ENCODE measurements at regions of chr3 and their contacts with region 1.

Region 1: DNA sequence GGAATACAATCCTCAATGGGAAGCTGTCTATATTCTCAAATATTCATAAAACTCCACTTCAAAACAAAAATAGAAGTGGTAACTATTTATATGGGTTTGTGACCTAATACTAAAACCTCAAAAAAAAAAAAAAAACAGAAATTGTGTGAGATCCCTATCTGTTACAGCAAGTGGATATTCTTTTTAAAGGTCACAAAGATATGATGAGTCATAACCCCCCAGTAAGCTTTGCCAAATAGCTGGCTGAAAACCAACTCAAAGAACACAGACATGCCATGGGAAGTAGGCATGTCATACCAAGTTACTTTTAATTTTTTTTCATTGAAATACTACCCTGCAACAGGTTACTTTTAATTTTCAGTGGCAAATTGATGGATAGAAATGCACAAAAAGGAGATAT is 62.5 kb downstream of the CBLB start:
- DNase-seq: no peak
- ATAC-seq: peak; percentile 35 to 83 (median 52)
- H3K4me3 ChIP-seq: no peak overlapping the region
- H3K27ac ChIP-seq: no peak overlapping the region
- H3K4me1 ChIP-seq: peaks cover 56% of the 10 kb centered on the region
- H3K27me3 ChIP-seq: no peaks in the 10 kb centered on the region
- CTCF ChIP-seq: no peak

Region 2: DNA sequence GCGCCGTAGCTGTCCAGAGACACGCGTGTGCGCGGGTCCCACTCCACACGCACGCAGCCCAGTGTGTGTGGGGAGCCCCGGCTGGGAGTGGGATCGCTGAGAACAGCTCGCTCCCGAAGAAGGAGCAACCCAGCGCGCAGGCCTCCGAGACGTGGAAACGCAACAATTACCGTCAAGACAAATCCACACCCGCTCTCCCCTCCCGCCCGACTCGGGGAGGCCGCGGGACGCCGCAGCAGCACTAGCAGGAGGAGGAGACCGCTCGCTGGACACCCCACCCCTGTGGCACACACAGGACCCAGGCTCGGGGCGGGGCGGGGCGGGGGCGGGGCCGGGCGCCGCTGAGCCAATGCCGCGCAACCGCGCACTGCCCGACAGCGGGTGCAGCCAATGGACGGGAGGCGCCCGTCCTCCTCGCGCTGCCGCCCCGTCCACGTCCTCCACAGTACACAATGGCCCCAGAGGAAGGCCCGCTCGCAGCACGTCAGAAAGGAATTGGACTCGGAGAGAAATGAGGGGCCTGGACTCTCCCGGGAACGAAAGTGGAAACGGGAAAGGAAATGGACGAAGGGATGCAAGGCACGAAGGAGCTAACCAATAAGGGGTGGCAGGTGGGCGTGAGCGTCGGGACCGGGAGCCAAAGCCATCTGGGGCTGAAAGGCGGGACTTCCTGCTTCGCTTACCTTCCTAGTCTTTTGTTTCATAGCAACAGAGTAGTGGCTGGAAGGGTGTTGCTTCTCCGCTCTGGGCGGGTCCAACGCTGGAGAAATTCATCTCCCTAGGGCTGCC is 62.6 kb after region 1 on chr3 and contains the start of gene CBLB:
- intact Hi-C with region 1: loop called in 1 of 2 experiments (anchors 2 kb)
- DNase-seq: peak; percentile 90 to 95
- ATAC-seq: peak; percentile 94 to 97 (median 96)
- H3K4me3 ChIP-seq: peak within 1 kb of the TSS; percentile 96
- H3K27ac ChIP-seq: peak within 1 kb of the TSS; percentile 93
- H3K4me1 ChIP-seq: peaks cover 40% of the 10 kb centered on the region
- H3K27me3 ChIP-seq: no peaks in the 10 kb centered on the region
- CTCF ChIP-seq: no peak
- total RNA-seq, gene CBLB: 12.1 to 18.2 (median 14.9) TPM

Region 3: GRCh38 chr3:105938101-105938500 is 131.7 kb after region 1 on chr3:
- intact Hi-C with region 1: no loop called
- DNase-seq: no peak
- ATAC-seq: peak in 1 of 4 donors; percentile 57
- H3K4me3 ChIP-seq: peak overlapping the region; percentile 36
- H3K27ac ChIP-seq: no peak overlapping the region
- H3K4me1 ChIP-seq: no peaks in the 10 kb centered on the region
- H3K27me3 ChIP-seq: no peaks in the 10 kb centered on the region
- CTCF ChIP-seq: no peak

Measured in psoas muscle (tissue), 8 donors.